Right ventricle myocardium inferior (tissue), 1 donor: ENCODE measurements at regions of chr1 and their contacts with region 1.

Region 1: DNA sequence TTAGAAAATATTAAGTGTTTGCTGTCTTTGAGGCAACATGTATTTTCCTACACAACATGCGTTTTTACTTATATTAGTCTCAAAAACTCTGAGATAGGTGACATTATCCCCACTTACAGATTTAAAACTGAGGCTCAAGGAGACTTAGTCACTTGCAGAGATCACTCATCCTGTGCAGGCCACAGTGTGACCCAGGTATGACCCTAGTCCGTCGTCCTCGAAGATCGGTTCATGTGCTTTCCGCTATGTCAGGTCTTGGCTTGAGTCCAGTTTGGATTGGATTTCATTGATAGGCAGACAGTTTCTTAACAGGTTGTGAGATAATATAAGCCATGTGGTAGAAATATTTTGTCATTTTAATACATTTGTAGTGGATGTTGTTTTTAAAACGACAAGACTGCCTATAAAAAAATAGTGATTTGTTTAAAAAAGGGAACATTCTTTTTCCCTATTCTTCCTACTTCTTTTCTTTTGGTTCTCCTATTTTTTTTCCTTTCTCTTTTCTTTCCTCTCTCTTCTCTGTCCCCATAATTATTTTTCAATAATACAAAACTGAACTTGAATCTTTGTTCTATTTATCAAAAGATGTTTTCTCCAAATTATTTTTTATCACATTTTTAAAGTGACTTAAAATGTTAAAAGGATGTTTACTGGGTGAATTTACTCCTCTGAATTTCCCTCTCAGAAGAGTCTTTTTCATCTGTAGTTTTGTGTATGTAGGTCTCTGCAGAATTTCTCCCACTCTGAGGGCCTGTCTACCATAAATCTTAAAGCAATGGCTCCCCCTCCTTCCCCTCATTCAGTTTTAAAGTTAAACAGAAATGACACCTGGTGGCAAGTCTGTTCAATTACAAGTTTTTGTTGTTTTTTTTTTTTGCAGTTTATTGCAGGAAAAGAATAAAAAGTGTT is 81.8 kb downstream of the PHTF1 start:
- DNase-seq: no peak
- ATAC-seq: peak; percentile 50

Region 2: GRCh38 chr1:112715264-112716053 is 962.0 kb before region 1 on chr1 and contains the start of gene PPM1J:
- intact Hi-C with region 1: loop called (anchors 5 kb)
- DNase-seq: peak; percentile 99
- ATAC-seq: peak; percentile 89
- total RNA-seq, gene PPM1J: 5.3 TPM

Region 3: GRCh38 chr1:113072757-113073478 is 604.6 kb before region 1 on chr1 and contains the start of gene LRIG2:
- intact Hi-C with region 1: loop called (anchors 5 kb)
- DNase-seq: peak; percentile 100
- ATAC-seq: peak; percentile 100
- total RNA-seq, gene LRIG2: 7.8 TPM

Region 4: DNA sequence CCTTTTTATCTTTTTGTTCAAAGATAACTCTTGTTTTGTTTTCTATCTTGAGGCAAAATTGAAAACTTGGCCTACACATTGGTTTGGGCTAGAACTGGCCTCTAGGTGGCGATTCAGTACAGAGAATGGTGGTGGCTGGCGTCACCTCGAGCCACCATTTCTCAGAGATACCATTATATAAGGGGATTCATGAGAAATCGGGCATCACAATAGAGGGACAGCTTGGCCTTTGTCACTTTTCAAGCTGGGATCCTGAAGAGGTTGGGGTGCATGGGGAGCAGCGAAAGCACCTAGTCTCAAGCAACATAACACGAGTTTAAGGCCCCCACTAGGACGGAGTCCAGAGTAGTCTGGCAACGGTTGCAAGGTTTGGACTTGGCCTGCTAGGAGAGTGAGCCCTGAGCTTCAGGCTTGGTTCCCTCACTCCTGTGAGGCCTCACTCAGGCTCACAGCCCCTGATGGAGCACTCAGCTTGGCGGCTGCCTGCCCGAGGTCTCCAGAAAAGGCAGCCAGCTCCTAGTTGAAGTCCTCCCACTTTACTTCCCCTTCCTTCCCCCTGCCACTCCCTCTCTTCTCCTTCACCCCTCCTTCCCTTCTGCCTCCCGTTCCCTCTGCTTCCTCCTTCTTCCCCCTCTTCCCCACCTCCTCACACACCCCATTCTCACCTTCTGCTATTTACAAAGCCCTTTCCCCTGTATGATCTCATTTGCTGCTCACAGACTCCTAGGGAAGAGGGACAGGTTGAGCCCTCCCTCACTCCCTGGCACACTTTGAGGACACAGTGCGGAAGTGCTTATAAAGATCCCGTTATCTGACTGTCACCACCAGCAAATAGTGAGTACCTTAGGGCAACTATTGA is 536.7 kb before region 1 on chr1:
- intact Hi-C with region 1: loop called (anchors 2 kb)
- DNase-seq: no peak
- ATAC-seq: peak; percentile 90

Region 5: GRCh38 chr1:113389953-113390834 is 287.3 kb before region 1 on chr1 and contains the start of gene MAGI3:
- intact Hi-C with region 1: loop called (anchors 5 kb)
- DNase-seq: peak; percentile 97
- ATAC-seq: peak; percentile 97
- total RNA-seq, gene MAGI3: 4.6 TPM